Gastrocnemius medialis (tissue), 4 donors: ENCODE measurements at regions of chr7 and their contacts with region 1.

Region 1: DNA sequence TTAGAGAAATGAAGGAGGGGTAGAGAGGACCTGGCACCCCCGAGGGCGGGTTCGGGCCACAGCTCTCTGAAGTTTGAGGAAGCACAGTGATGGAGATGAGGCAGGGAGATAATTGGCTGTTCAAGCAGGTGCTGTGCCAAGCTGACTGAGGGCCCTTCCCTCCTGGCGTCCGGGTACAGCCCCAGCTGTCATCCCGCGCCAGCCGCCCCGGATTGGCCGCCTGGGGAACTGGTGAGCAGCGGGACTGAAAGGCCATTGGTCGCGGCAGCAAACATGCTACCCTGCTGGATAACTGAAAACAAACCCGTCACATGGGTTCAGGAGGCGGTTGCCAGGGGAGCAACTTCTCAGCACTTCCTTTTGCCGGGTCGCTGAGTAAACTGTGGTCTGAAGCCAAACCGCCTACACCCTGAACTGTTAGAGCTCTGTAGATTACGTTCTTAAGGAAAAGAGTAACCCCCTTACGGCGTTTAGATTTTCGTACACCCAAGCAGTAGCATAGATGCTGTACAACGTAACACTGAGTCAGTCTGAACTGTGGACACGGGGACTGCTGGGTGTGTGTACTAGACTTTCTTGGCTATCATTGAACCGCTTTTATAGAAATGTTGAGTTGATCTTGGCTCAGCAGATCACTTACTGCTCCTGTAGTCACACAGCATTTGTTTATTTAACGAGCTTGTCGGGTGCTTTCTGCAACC is 1.3 kb downstream of the INSIG1 start:
- DNase-seq: peak; percentile 95 to 96
- ATAC-seq: peak; percentile 79 to 85
- H3K4me3 ChIP-seq: peak overlapping the region; percentile 56 to 96 (median 76)
- H3K27ac ChIP-seq: peak overlapping the region; percentile 81 to 92 (median 88)
- H3K4me1 ChIP-seq: peaks cover 14 to 17% of the 10 kb centered on the region in 2 donors
- H3K27me3 ChIP-seq: no peaks in the 10 kb centered on the region
- CTCF ChIP-seq: no peak
- POLR2A ChIP-seq: peak; percentile 44 to 79

Region 2: GRCh38 chr7:154927624-154928143 is 371.3 kb before region 1 on chr7:
- in situ Hi-C with region 1: no loop called
- intact Hi-C with region 1: loop called (anchors 1 kb)
- DNase-seq: peak; percentile 65 to 71
- ATAC-seq: peak; percentile 80 to 84
- H3K4me3 ChIP-seq: peak overlapping the region; percentile 66 to 77 (median 72)
- H3K27ac ChIP-seq: peak overlapping the region; percentile 82 to 88 (median 84)
- H3K4me1 ChIP-seq: peaks cover 5 to 9% of the 10 kb centered on the region in 2 donors
- H3K27me3 ChIP-seq: no peaks in the 10 kb centered on the region
- CTCF ChIP-seq: peak; percentile 40 to 72 (median 69)
- POLR2A ChIP-seq: no peak

Region 3: DNA sequence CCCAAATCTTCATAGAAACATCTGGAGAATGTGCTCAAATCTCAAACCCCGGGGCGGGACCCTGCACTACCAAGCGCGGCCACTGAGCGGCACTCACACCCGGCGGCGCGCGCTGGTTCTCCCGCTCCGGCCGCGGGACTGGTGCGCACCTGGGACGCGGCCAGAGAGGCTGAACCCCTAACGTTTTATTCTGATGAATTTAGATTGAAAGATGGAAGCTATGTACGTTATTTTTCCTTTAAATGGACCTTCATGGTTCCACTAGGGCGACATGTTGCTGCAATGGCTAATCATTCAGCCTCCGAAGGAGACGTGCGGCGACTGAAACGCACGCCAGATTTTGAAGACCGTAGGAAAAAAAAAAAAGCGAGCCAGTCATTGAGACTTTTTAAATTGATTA is 108.3 kb before region 1 on chr7:
- in situ Hi-C with region 1: no loop called
- intact Hi-C with region 1: loop called (anchors 2 kb)
- DNase-seq: peak in 1 of 2 donors; percentile 38
- ATAC-seq: peak; percentile 33 to 42
- H3K4me3 ChIP-seq: peak overlapping the region; percentile 22 to 39 (median 26)
- H3K27ac ChIP-seq: no peak overlapping the region
- H3K4me1 ChIP-seq: peaks cover 0 to 3% of the 10 kb centered on the region in 2 donors
- H3K27me3 ChIP-seq: peaks cover 0 to 3% (median 0%) of the 10 kb centered on the region in 3 donors
- CTCF ChIP-seq: peak; percentile 87 to 95 (median 89)
- POLR2A ChIP-seq: no peak

Region 4: DNA sequence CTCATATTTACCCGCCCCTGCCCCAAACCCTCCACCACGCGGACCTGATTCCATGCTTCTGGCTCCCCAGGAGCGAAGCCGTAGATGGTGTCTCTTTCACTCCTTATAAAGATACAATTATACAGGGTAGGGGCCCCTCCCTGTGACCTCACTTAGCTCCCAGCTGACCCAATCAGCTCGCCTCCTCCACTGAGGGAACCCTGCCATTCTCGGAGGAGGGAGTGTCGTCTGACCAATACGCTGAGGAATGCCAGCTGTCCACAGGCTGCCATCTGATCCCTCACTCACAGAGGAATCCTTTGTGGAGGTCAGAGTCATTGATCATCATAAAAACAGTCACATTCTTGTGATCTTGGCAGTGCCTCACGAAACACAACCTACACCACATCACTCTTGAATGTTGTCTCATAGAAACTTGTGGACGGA is 68.8 kb before region 1 on chr7:
- in situ Hi-C with region 1: no loop called
- intact Hi-C with region 1: loop called (anchors 2 kb)
- DNase-seq: peak; percentile 75 to 81
- ATAC-seq: peak; percentile 97
- H3K4me3 ChIP-seq: no peak overlapping the region
- H3K27ac ChIP-seq: peak overlapping the region in 1 of 4 donors; percentile 27
- H3K4me1 ChIP-seq: no peaks in the 10 kb centered on the region
- H3K27me3 ChIP-seq: no peaks in the 10 kb centered on the region
- CTCF ChIP-seq: no peak
- POLR2A ChIP-seq: no peak

Region 5: GRCh38 chr7:155456738-155457564 is 158.0 kb after region 1 on chr7:
- in situ Hi-C with region 1: no loop called
- intact Hi-C with region 1: loop called (anchors 2 kb)
- DNase-seq: peak; percentile 24 to 62
- ATAC-seq: peak; percentile 87 to 89
- H3K4me3 ChIP-seq: peak overlapping the region; percentile 47 to 77 (median 67)
- H3K27ac ChIP-seq: no peak overlapping the region
- H3K4me1 ChIP-seq: peaks cover 34 to 45% of the 10 kb centered on the region in 2 donors
- H3K27me3 ChIP-seq: peaks cover 86 to 94% (median 89%) of the 10 kb centered on the region in 3 donors
- CTCF ChIP-seq: no peak
- POLR2A ChIP-seq: peak in 1 of 2 donors; percentile 34